Activated CD4-positive, alpha-beta memory T cell treated with anti-CD3 and anti-CD28 coated beads, Interleukin-2, amount 10 ng/mL, durations not matched to agents 7 days and 5 days (primary cell): ENCODE measurements at regions of chr3 and their contacts with region 1.

Region 1: GRCh38 chr3:197256836-197257444 is 41.5 kb downstream of the DLG1 start:
- DNase-seq: peak; percentile 31
- H3K4me3 Mint-ChIP-seq: no peak overlapping the region
- H3K27ac Mint-ChIP-seq: no peak overlapping the region
- H3K4me1 Mint-ChIP-seq: peaks cover 19% of the 10 kb centered on the region
- H3K27me3 Mint-ChIP-seq: no peaks in the 10 kb centered on the region

Region 2: GRCh38 chr3:197029511-197030167 is 227.3 kb before region 1 on chr3 and contains the start of gene MELTF:
- CTCF ChIA-PET with region 1: no interaction called
- POLR2A ChIA-PET with region 1: no interaction called
- DNase-seq: peak; percentile 75
- H3K4me3 Mint-ChIP-seq: peak within 1 kb of the TSS; percentile 67
- H3K27ac Mint-ChIP-seq: no peak within 1 kb of the TSS
- H3K4me1 Mint-ChIP-seq: peaks cover 27% of the 10 kb centered on the region
- H3K27me3 Mint-ChIP-seq: peaks cover 3% of the 10 kb centered on the region
- total RNA-seq, gene MELTF: 5.1 to 6.1 TPM

Region 3: DNA sequence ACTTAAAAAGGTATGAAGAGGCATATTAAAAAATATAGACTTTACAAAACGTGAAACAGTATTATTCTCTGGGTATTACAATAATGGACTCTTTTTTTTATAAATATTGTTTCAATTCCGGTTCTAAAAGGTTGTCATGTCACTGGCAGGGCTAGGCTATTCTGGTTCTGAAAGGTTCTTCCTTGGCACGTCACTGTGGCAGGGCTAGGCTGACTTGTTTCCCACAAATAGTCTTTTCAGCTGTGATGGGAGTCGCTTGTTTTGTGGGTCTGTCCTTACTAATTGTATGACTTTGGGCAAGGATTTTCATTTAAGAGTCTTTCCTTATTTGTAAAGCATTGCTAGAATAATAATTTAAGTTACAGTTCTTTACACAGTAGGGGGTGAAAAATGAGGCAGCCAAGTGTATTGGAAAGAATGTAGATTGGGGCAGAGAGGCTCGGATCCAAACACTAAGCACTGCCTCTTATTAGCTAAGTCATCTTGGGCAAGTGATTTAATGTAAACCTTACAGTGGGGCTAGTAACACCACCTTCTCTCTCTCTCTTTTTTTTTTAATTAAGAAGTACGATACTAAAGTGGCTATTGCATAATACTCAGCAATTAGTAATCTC is 215.0 kb before region 1 on chr3:
- CTCF ChIA-PET with region 1: no interaction called
- POLR2A ChIA-PET with region 1: no interaction called
- DNase-seq: no peak
- H3K4me3 Mint-ChIP-seq: no peak overlapping the region
- H3K27ac Mint-ChIP-seq: no peak overlapping the region
- H3K4me1 Mint-ChIP-seq: no peaks in the 10 kb centered on the region
- H3K27me3 Mint-ChIP-seq: no peaks in the 10 kb centered on the region

Region 4: GRCh38 chr3:197181741-197182140 is 75.2 kb before region 1 on chr3:
- CTCF ChIA-PET with region 1: no interaction called
- POLR2A ChIA-PET with region 1: no interaction called
- DNase-seq: no peak
- H3K4me3 Mint-ChIP-seq: no peak overlapping the region
- H3K27ac Mint-ChIP-seq: no peak overlapping the region
- H3K4me1 Mint-ChIP-seq: no peaks in the 10 kb centered on the region
- H3K27me3 Mint-ChIP-seq: no peaks in the 10 kb centered on the region

Region 5: DNA sequence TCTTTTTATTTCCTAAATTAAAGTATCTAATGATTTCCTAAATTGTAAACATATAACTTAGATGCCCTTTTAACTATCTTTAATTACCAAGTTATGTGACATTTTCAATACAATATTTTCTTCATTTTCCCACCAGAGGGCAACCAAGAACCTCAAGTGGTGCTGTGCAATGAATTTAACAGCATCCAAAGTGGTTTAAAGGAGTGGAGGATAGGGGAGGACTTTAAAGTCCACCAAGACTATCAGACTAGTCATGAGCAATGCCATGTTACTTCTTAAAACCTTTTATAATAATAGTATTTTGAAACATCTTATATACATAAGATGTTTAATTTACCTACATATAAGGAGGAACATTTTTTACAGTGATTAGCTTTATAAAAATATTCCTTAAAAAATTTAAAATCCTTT is 32.9 kb before region 1 on chr3:
- CTCF ChIA-PET with region 1: interaction called, 13 read pairs
- POLR2A ChIA-PET with region 1: no interaction called
- DNase-seq: no peak
- H3K4me3 Mint-ChIP-seq: no peak overlapping the region
- H3K27ac Mint-ChIP-seq: no peak overlapping the region
- H3K4me1 Mint-ChIP-seq: peaks cover 14% of the 10 kb centered on the region
- H3K27me3 Mint-ChIP-seq: no peaks in the 10 kb centered on the region

Region 6: GRCh38 chr3:197268294-197268693 is 11.4 kb after region 1 on chr3:
- CTCF ChIA-PET with region 1: interaction called, 24 read pairs
- POLR2A ChIA-PET with region 1: no interaction called
- DNase-seq: no peak
- H3K4me3 Mint-ChIP-seq: no peak overlapping the region
- H3K27ac Mint-ChIP-seq: no peak overlapping the region
- H3K4me1 Mint-ChIP-seq: peaks cover 6% of the 10 kb centered on the region
- H3K27me3 Mint-ChIP-seq: no peaks in the 10 kb centered on the region

Region 7: DNA sequence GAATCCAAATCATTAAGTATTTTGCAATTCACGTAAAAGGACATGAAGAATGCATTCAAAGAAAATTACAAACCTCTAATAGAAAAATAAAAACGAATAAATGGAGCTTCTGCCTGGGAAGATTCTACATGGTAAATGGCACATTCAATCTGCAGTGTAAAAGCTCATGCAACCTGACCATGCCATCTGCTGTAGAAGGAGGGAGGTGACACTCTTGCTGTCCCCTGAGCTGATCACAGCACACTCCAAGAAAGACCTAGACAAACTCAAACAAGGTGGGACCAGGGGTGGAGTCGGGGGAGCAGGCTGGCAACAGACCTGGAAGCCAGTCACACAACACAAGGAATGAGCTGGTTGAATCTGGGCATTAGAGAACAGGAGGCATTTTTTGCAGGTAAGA is 197.1 kb after region 1 on chr3:
- CTCF ChIA-PET with region 1: interaction called, 27 read pairs
- POLR2A ChIA-PET with region 1: no interaction called
- DNase-seq: no peak
- H3K4me3 Mint-ChIP-seq: no peak overlapping the region
- H3K27ac Mint-ChIP-seq: no peak overlapping the region
- H3K4me1 Mint-ChIP-seq: peaks cover 14% of the 10 kb centered on the region
- H3K27me3 Mint-ChIP-seq: peaks cover 40% of the 10 kb centered on the region

Region 8: DNA sequence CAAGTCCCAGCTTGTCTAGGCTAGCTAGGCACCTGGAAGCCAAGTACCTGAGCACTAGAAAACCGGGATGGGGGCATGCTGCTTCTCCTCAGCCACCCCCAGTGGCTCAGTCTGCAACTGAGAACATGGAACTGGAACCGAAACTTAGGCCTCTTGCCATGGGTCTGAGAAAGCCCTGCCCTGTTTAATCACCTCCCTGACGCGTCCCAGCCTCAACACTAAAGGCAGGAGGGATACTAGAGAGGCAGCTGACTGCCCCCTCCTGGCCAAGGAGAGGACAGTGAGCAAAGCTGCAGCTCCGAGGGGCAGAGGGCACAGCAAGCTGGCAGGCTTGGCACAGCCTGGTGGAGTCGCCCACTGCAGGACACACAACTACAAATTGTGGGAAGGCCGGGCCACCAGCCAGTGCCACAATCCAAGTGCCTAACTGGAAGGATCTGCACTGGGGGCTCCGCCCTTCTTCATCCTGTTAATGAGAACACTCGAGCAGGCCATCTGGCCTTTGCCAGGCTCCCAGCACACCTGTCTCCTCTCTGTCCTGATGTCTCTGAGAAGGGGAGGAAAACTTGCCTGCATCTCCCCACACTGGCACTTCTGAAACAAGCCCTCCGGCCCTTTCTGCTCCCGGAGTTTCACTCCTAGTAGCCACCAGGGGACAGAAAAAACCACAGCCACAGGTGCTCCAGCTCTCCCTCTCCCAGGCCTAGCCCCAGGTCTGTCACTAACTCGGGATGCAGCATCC is 245.1 kb after region 1 on chr3:
- CTCF ChIA-PET with region 1: interaction called, 42 read pairs
- POLR2A ChIA-PET with region 1: no interaction called
- DNase-seq: peak; percentile 57
- H3K4me3 Mint-ChIP-seq: no peak overlapping the region
- H3K27ac Mint-ChIP-seq: no peak overlapping the region
- H3K4me1 Mint-ChIP-seq: no peaks in the 10 kb centered on the region
- H3K27me3 Mint-ChIP-seq: no peaks in the 10 kb centered on the region

Region 9: DNA sequence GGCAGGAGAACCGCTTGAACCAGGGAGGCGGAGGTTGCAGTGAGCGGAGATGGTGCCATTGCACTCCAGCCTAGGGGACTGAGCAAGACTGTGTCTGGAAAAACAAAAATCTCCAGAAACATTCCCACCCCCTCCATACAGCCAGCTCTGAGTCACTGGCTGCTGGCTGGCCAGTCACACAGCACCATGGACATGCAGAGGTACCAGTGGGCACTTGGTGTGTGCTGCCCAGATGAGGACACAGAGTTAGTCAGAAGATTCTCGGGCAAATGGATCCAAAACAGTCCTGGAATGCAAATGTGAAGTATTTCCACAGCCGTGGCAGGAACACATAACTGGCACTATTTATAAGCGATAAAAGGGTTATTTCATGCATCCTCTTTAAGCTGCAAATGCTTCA is 254.2 kb after region 1 on chr3:
- CTCF ChIA-PET with region 1: interaction called, 12 read pairs
- POLR2A ChIA-PET with region 1: no interaction called
- DNase-seq: no peak
- H3K4me3 Mint-ChIP-seq: no peak overlapping the region
- H3K27ac Mint-ChIP-seq: no peak overlapping the region
- H3K4me1 Mint-ChIP-seq: peaks cover 4% of the 10 kb centered on the region
- H3K27me3 Mint-ChIP-seq: no peaks in the 10 kb centered on the region